ENCODE measurements at regions of chr3 and their contacts with region 1.

Region 1: GRCh38 chr3:155352900-155353490 is 59.5 kb upstream of the STRIT1 start:
- DNase-seq: no peak

Region 2: GRCh38 chr3:155512867-155513261 is 159.9 kb after region 1 on chr3:
- intact Hi-C with region 1: no loop called
- DNase-seq: no peak

Region 3: GRCh38 chr3:155701882-155702465 is 349.0 kb after region 1 on chr3:
- intact Hi-C with region 1: loop called (anchors 5 to 10 kb)
- DNase-seq: no peak